ENCODE measurements at regions of chr4 and their contacts with region 1.

Region 1: GRCh38 chr4:37881811-37882210 is 9.1 kb upstream of the TBC1D1 start:
- DNase-seq: no peak
- H3K4me3 ChIP-seq: no peak overlapping the region
- H3K27ac ChIP-seq: no peak overlapping the region
- H3K4me1 ChIP-seq: no peaks in the 10 kb centered on the region
- H3K27me3 ChIP-seq: peaks cover 0 to 2% (median 0%) of the 10 kb centered on the region in 4 experiments; a peak in 1 of 7 replicates
- CTCF ChIP-seq: no peak
- EP300 ChIP-seq: no peak
- POLR2A ChIP-seq: no peak
- RAD21 ChIP-seq: no peak

Region 2: DNA sequence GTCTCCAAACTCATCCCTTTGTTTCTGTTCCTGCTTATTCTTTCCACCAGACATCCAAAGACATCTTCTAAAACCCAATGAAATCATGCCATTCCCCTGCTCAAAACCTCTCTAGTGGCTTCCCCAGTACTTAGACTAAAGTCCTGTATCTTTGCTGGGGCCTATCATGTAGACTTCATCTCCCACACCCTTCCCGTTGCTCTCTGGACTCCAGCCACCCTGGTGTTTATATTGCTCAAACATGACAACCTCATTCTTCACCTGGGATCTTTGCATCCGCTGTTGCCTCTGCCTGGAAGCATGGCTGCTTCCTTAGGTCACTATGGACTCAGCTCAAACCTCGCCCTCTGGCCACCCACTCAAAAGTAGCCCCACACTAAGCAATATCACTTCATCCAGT is 32.7 kb after region 1 on chr4:
- CTCF ChIA-PET with region 1: interaction called, 10 read pairs
- POLR2A ChIA-PET with region 1: no interaction called
- DNase-seq: no peak
- H3K4me3 ChIP-seq: no peak overlapping the region
- H3K27ac ChIP-seq: no peak overlapping the region
- H3K4me1 ChIP-seq: no peaks in the 10 kb centered on the region
- H3K27me3 ChIP-seq: no peaks in the 10 kb centered on the region
- CTCF ChIP-seq: no peak
- EP300 ChIP-seq: no peak
- POLR2A ChIP-seq: no peak
- RAD21 ChIP-seq: no peak

Measured in H1 (cell line).